ENCODE measurements at regions of chrX and their contacts with region 1.

Region 1: GRCh38 chrX:49878834-49879659 is at the start of gene USP27X:
- DNase-seq: peak; percentile 55 to 92 (median 79)
- ATAC-seq: peak; percentile 91
- H3K4me3 ChIP-seq: peak within 1 kb of the TSS; percentile 58 to 66
- H3K4me3 Mint-ChIP-seq: peak within 1 kb of the TSS; percentile 84
- H3K27ac ChIP-seq: peak within 1 kb of the TSS; percentile 37 to 55
- H3K27ac Mint-ChIP-seq: peak within 1 kb of the TSS; percentile 75
- H3K4me1 ChIP-seq: peaks cover 24% of the 10 kb centered on the region
- H3K4me1 Mint-ChIP-seq: peaks cover 30% of the 10 kb centered on the region
- H3K27me3 ChIP-seq: no peaks in the 10 kb centered on the region
- H3K27me3 Mint-ChIP-seq: no peaks in the 10 kb centered on the region
- CTCF ChIP-seq: peak; percentile 40
- total RNA-seq, gene USP27X: 2.6 to 2.7 TPM

Region 2: DNA sequence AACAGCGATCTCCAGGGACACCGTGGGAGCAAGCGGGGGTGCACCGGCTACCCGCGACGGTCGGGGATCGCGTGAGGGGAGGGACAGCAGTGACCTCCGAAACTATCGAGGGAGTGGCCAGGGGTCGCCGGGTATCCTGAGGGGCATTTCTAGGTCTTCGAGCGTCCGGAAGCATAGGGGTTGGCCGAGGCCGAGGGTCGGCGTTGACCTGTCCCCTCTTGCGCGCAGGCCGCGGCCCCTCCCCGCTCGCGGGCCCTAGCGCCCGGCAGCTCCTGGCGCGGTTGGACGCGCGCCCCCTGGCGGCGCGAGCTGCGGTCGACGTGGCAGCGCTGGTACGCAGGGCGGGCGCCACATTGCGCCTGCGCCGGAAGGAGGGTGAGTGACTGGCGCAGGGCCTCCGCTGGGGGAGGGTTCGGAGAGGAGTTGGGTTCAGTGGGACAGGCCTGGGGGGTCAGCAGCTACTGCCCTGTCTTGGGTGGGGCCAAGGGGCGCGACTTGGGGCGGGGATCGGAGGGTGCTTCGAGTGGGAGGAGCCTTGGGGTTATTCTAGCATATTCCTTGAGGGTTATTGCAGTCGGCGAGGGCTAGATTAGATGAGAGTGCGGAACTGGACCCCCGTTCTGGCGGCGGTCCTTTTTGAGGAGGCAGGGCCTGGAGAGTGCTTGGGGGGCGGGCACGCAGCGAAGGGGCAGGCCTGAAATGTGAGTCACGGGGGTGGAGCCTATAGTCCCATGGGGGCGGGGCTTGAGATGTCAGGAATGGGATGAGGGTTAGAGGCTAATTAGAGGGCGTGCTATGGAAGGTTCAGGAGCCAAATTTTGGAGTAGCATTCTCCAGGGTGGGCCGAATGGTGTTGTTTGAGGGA is 715.3 kb before region 1 on chrX:
- CTCF ChIA-PET with region 1: no interaction called
- POLR2A ChIA-PET with region 1: no interaction called
- intact Hi-C with region 1: loop called in 1 of 2 experiments (anchors 5 kb)
- DNase-seq: peak in 8 of 9 experiments; percentile 67 to 91 (median 82)
- ATAC-seq: peak; percentile 54
- H3K4me3 ChIP-seq: peak overlapping the region; percentile 49
- H3K4me3 Mint-ChIP-seq: peak overlapping the region; percentile 81
- H3K27ac ChIP-seq: peak overlapping the region; percentile 56 to 84
- H3K27ac Mint-ChIP-seq: peak overlapping the region; percentile 92
- H3K4me1 ChIP-seq: peaks cover 21% of the 10 kb centered on the region
- H3K4me1 Mint-ChIP-seq: peaks cover 27% of the 10 kb centered on the region
- H3K27me3 ChIP-seq: no peaks in the 10 kb centered on the region
- H3K27me3 Mint-ChIP-seq: no peaks in the 10 kb centered on the region
- CTCF ChIP-seq: peak; percentile 57

Region 3: DNA sequence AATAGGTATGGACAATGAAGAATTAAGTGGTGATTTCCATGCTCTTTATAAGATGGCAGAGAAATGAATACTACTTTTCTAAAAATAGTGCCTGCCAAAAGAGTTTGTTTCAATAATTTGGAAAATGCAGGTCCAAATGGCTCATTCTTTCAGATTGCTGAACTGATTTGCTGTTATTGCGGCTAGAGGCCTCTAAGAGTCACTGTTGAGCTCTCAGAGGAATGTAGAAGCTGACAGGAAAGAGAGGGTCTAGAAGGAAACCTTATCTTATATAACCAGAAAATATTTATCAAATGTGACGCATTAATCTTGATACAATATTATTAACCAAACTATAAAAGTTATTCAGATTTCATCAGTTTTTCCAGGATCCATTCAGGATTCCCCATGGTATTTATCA is 117.6 kb before region 1 on chrX:
- CTCF ChIA-PET with region 1: interaction called, 5 read pairs
- POLR2A ChIA-PET with region 1: no interaction called
- intact Hi-C with region 1: loop called (anchors 2 to 5 kb)
- DNase-seq: peak in 3 of 9 experiments; percentile 10 to 34 (median 24)
- ATAC-seq: peak; percentile 52
- H3K4me3 ChIP-seq: no peak overlapping the region
- H3K4me3 Mint-ChIP-seq: no peak overlapping the region
- H3K27ac ChIP-seq: no peak overlapping the region
- H3K27ac Mint-ChIP-seq: no peak overlapping the region
- H3K4me1 ChIP-seq: no peaks in the 10 kb centered on the region
- H3K4me1 Mint-ChIP-seq: peaks cover 1% of the 10 kb centered on the region
- H3K27me3 ChIP-seq: no peaks in the 10 kb centered on the region
- H3K27me3 Mint-ChIP-seq: peaks cover 2% of the 10 kb centered on the region
- CTCF ChIP-seq: peak; percentile 25

Region 4: GRCh38 chrX:50036426-50036825 is 157.4 kb after region 1 on chrX:
- CTCF ChIA-PET with region 1: no interaction called
- POLR2A ChIA-PET with region 1: no interaction called
- intact Hi-C with region 1: no loop called
- DNase-seq: no peak
- ATAC-seq: no peak
- H3K4me3 ChIP-seq: no peak overlapping the region
- H3K4me3 Mint-ChIP-seq: no peak overlapping the region
- H3K27ac ChIP-seq: no peak overlapping the region
- H3K27ac Mint-ChIP-seq: no peak overlapping the region
- H3K4me1 ChIP-seq: no peaks in the 10 kb centered on the region
- H3K4me1 Mint-ChIP-seq: no peaks in the 10 kb centered on the region
- H3K27me3 ChIP-seq: no peaks in the 10 kb centered on the region
- H3K27me3 Mint-ChIP-seq: no peaks in the 10 kb centered on the region
- CTCF ChIP-seq: no peak

Measured in CD8-positive, alpha-beta T cell (primary cell).